ENCODE measurements at regions of chr10 and their contacts with region 1.

Region 1: DNA sequence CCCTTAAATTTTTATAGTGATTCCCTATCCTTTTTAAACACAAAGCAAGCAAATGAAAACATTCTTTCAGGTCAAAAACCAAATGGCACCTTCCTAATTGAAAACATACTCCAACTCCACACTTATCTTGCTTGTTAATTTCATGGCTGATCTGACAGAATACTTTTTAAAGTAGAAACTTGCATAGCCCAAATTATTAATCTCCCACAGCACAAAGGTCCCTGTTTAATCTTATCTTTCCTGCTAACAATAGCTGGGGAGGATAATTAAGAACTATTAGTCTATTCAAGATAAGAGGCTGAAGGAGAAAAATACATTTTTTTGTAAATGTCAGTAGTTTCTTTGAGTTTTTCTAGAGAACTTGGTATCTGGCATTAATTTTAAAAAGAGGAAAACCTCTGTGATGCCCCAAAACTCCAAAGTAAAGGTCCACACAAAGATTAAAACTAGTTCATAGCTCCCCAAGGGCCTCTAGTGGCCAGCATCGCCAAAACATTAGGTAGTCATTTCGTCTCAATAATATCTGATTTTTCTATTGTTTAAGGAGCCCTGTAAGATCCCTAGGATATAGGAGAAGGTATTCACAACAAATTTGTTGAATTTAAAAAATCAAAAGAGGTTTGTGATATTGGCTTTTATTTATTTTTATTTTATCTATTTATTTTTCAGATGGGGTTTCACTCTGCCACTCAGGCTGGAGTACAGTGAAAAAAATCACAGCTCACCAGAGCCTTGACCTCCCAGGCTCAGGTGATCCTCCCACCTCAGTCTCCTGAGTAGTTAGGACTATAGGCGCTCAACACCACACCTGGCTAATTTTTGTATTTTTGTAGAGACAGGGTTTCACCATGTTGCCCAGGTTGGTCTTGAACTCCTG is 14.7 kb downstream of the CDNF start:
- DNase-seq: no peak
- H3K4me3 ChIP-seq: no peak overlapping the region
- H3K27me3 ChIP-seq: peaks cover 3% of the 10 kb centered on the region; the same call in 1 of the 2 replicates
- CTCF ChIP-seq: peak; percentile 74

Region 2: GRCh38 chr10:14500172-14500765 is 322.8 kb before region 1 on chr10:
- CTCF ChIA-PET with region 1: interaction called, 15 read pairs
- POLR2A ChIA-PET with region 1: no interaction called
- DNase-seq: no peak
- H3K4me3 ChIP-seq: no peak overlapping the region
- H3K27me3 ChIP-seq: no peaks in the 10 kb centered on the region
- CTCF ChIP-seq: no peak

Region 3: DNA sequence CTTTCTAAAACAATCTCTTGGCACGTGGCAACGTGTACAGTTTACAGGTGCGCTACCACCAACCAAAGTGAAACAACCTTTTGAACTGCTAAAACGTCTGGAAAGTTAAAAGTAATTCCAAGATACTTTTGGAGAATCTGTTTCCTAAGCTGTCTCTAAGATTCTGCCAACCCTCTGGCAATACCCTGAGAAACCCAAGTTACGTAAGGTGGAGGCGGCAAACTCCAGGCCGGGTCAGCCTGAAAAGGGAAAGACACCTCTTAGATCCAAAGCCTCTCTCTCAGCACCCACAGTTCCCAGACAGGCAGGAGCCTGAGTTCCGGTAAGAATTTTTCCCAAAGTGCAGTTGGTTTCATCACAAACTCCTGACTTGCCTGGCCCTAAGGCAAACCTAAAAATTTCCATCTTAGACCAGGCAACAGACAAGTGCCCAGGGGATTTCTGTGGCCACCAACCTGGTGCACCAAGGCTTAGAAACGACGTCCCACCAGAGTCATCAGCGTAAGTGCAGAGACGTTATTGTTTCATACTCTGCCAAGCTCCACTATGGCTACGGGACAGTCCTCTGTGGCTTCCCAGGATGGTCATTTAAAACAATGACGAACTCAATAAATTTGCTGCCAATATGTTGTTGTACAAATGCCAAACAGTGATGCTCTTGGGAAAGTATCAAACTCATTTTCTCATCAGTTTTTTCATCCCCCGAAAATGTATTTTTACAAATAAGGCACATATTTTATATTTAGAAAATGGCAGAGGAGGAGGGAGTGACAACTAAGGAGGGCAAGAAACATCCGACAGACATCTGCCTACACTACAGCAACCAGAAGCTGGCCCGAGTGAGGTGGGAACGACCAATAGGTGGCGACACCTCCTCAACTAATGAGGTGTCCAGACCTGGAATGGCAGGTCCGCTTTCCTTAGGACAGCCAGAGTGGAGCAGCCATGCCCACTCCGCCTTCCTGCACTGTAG is 286.6 kb before region 1 on chr10:
- CTCF ChIA-PET with region 1: interaction called, 23 read pairs
- POLR2A ChIA-PET with region 1: no interaction called
- DNase-seq: no peak
- H3K4me3 ChIP-seq: no peak overlapping the region
- H3K27me3 ChIP-seq: no peaks in the 10 kb centered on the region
- CTCF ChIP-seq: peak; percentile 66

Region 4: DNA sequence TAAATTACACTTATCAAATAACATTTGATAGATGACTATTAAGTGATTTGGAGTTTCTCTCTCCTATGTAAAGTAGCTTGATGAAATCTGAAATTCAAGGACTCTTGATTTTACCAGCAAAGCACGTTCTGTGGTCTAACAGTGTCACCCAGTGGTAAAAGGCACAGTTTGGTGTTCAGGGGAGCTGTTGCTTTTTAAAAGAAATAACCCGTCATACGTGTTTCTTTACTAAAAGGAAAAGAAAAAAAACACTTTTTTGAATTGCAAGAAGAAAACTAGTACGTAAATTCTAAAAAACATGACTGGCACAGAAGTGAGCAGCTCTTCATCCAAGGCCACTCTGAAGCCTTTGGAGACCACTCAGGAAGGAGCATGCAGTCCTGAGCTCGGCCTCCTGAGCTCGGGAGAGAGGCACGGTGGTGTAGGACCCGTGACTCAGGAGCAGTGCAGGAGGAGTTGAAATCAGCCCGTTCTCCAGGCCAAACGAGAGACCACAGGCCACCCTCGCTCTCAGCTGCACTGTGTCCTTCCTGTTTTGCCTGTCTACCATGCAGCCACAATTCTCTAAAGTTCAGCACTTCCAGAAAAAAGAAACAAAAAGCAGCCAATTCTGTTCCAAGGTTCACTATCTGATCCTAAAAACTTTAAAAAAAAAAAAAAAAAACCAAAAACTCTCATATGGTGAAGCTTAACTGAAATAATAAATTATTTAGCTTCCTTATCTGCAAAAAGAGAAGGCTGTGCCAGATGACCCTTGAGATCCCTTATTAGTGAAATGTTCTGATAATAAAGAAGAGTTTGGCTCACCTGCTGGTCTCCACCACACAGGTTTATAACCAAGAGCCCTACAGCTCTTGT is 279.8 kb before region 1 on chr10:
- CTCF ChIA-PET with region 1: interaction called, 17 read pairs
- POLR2A ChIA-PET with region 1: no interaction called
- DNase-seq: no peak
- H3K4me3 ChIP-seq: no peak overlapping the region
- H3K27me3 ChIP-seq: no peaks in the 10 kb centered on the region
- CTCF ChIP-seq: peak; percentile 22; the same call in 1 of the 2 replicates

Region 5: DNA sequence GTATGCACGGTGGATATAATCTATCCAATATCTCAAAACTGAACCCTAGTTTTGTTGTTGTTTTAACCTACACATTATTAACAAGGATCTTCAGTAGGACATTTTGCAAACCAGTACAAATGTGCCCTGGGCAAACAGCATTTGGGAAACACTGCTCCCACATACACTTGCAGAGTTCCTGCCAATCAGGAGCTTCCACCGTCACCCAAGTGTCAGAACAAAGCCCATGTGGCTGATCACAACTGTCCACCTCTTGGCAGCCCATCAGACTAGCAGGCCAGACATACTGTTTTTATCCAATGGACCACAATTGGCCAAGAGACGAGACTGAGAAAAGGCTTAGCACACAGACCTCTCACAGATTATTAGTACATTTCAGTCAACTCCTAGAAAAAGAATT is 248.8 kb before region 1 on chr10:
- CTCF ChIA-PET with region 1: no interaction called
- POLR2A ChIA-PET with region 1: interaction called, 14 read pairs
- DNase-seq: no peak
- H3K4me3 ChIP-seq: no peak overlapping the region
- H3K27me3 ChIP-seq: no peaks in the 10 kb centered on the region
- CTCF ChIP-seq: no peak

Region 6: GRCh38 chr10:14837757-14838581 is 14.9 kb after region 1 on chr10 and contains the starts of genes CDNF, HSPA14 and MSANTD7:
- CTCF ChIA-PET with region 1: interaction called, 13 read pairs
- POLR2A ChIA-PET with region 1: no interaction called
- DNase-seq: peak; percentile 96
- H3K4me3 ChIP-seq: peak within 1 kb of the TSS; percentile 84
- H3K27me3 ChIP-seq: no peaks in the 10 kb centered on the region
- CTCF ChIP-seq: no peak; the same call in 1 of the 2 replicates
- polyA plus RNA-seq, gene CDNF: 1.0 and 1.1 TPM in 2 replicates
- polyA plus RNA-seq, gene HSPA14: 5.4 and 10.0 TPM in 2 replicates
- polyA plus RNA-seq, gene MSANTD7: 4.2 and 5.1 TPM in 2 replicates